GM10248 (cell line): ENCODE measurements at regions of chr11 and their contacts with region 1.

Region 1: GRCh38 chr11:65817835-65818742 is 15.7 kb upstream of the SNX32 start:
- DNase-seq: peak; percentile 95
- CTCF ChIP-seq: peak; percentile 100

Region 2: GRCh38 chr11:65314501-65315203 is 503.4 kb before region 1 on chr11 and contains the start of gene CDC42EP2:
- CTCF ChIA-PET with region 1: no interaction called
- POLR2A ChIA-PET with region 1: no interaction called
- DNase-seq: peak; percentile 94
- CTCF ChIP-seq: no peak

Region 3: DNA sequence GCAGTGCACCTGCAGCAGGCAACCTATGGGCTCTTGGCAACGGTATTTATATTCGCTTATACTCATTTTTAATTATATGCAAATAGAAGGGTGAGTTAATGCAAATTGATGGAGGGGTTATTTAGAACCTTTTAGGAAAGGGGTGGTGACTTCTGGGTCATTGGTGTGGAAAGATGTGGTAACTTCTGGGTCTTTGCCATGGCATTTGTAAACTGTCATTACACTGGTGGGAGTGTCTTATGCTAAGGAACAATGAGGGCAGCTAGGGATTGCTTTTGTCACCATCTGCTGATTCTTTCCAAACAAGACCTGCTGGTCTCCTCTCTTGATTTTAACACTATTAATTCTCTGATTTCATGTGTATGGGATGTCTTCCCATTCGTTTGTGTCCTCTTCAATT is 117.7 kb before region 1 on chr11:
- CTCF ChIA-PET with region 1: interaction called, 17 read pairs
- POLR2A ChIA-PET with region 1: no interaction called
- DNase-seq: no peak
- CTCF ChIP-seq: no peak

Region 4: GRCh38 chr11:65720237-65720934 is 97.7 kb before region 1 on chr11 and contains the start of gene RNASEH2C:
- CTCF ChIA-PET with region 1: interaction called, 12 read pairs
- POLR2A ChIA-PET with region 1: no interaction called
- DNase-seq: peak; percentile 93
- CTCF ChIP-seq: no peak

Region 5: DNA sequence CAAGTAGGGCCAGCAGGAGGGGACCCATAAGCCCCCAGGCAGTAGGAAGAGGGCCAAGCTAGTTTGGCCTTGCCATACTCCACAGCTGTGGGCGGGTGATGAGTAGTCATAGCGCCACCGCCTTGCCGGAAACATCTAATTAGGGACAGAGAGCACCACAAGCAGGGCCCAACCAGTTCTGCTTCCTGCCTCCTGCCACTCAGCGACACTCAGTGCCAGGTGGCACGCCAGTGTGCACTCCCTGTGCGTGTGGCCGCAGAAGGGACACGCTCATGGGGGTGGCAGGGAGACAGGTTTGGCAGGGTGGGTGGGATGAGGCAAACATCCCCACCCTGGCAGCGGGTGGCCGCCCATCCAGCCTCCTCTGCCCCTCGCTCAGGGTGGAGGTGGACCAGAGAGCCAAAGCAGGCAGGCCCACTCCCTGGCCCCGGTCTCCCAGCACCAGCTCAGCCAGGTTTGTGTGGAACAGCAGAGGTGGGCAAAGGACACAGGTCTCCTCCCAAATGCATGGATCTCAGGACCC is 26.3 kb before region 1 on chr11:
- CTCF ChIA-PET with region 1: interaction called, 15 read pairs
- POLR2A ChIA-PET with region 1: no interaction called
- DNase-seq: peak; percentile 82
- CTCF ChIP-seq: no peak

Region 6: GRCh38 chr11:65833297-65834030 is 15.4 kb after region 1 on chr11 and contains the start of gene SNX32:
- CTCF ChIA-PET with region 1: interaction called, 25 read pairs
- POLR2A ChIA-PET with region 1: no interaction called
- DNase-seq: peak; percentile 100
- CTCF ChIP-seq: no peak

Region 7: DNA sequence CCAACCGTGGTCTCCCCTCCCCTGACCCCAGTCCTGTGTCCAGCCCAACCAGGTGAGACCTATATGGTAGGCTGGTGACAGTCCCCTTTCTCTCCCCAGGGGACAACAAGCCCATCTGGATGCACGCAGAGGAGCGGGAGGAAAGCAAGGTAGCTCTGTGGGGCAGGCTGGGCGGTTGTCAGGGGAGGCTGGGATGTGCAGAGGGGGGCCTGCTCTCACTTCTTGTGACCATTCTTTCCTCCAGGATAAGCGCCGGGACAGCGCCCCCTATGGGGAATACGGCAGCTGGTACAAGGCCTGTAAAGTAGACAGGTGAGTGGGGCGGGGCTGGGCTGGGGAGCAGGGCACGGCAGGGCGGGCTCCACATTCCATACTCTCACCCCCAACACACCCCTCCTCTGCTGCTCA is 446.8 kb after region 1 on chr11:
- CTCF ChIA-PET with region 1: no interaction called
- POLR2A ChIA-PET with region 1: no interaction called
- DNase-seq: no peak
- CTCF ChIP-seq: peak; percentile 40